ENCODE measurements at regions of chr1 and their contacts with region 1.

Region 1: DNA sequence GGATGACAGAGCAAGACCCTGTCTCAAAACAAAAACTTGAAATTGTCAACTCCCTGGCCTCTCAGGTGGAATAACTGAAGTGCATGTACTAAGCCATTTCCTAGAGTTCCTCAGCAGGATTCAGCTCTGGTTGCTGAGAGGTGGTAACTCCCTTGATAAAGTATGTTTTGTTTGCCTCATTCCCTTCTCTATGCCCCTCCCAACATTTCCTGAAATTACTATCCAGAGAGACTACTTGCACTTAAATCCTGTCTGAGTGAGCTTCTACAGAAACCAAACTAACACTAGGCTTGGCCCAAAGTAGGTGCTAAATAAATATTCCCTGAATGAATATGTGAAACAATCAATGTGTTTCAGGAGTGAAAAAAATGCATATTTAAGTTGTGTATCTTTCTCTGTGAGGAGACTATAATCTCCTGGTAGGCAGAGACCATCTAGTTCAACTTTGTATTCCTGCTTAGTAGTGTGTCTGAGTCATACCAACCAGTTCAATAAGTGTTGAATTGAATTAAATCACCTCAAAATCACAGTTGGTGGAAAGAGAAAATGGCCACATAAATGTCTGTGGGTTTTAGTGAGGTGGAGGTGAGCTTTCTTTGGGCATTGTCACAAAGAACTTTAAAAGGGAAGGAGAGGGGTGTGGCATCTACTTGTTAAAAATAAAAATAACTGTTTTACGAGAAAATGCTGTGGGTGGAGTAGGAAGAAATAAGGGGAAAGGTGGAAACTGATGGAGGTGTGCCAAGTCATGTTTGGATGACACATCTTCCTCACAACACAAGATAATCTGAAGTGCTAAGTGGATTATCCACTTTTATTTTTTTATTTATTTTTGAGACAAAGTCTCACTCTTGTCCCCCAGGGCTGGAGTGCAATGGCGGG is 12.6 kb downstream of the RIMKLA start:
- DNase-seq: peak; percentile 84
- ATAC-seq: peak; percentile 78
- H3K4me3 ChIP-seq: peak overlapping the region; percentile 21
- H3K27ac ChIP-seq: peak overlapping the region; percentile 64
- H3K4me1 ChIP-seq: peaks cover 26% of the 10 kb centered on the region
- H3K27me3 ChIP-seq: no peaks in the 10 kb centered on the region
- CTCF ChIP-seq: no peak

Region 2: GRCh38 chr1:42173155-42173933 is 219.9 kb before region 1 on chr1:
- CTCF ChIA-PET with region 1: no interaction called
- POLR2A ChIA-PET with region 1: no interaction called
- intact Hi-C with region 1: loop called (anchors 5 kb)
- DNase-seq: peak; percentile 56
- ATAC-seq: peak; percentile 31
- H3K4me3 ChIP-seq: no peak overlapping the region
- H3K27ac ChIP-seq: peak overlapping the region; percentile 88
- H3K4me1 ChIP-seq: peaks cover 64% of the 10 kb centered on the region
- H3K27me3 ChIP-seq: no peaks in the 10 kb centered on the region
- CTCF ChIP-seq: peak; percentile 98

Region 3: DNA sequence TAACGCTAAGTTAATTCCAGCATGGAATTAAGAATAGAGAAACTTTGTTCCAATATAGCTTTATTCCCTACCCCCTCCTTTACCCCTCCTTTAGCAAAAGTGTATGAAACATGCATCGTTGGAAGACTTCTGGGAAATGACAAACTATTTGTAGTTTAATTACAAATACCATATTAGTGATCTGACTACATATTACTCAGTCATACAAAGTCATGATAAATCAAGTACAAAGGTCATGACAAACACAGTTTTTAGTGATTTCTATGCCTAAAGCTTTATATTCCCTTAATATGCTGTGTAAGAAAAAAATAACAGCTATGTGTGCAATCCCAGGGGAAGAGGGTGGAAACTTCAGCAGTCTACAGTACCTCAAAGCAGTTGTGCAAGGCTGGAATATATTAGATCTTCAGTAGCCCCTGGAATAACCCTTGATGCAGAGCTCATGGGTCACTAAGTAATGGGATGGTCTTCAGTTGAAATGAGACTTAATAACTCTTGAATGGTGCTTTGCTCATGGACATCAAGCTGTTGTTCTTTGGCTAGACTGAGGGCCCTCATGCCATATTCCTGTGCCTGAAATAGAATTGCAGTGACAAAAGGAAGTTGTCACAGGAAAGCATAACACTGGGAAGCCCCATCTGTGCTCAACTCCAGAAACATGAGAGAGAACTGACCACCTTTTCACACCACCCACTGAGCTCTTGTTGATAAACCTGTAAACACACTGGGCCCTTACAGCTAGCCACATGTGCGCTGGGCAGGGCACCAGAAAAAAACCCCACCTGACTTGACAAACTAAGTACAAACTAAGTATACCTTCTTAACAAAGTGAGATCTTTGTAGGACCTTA is 37.3 kb after region 1 on chr1:
- CTCF ChIA-PET with region 1: no interaction called
- POLR2A ChIA-PET with region 1: no interaction called
- intact Hi-C with region 1: loop called (anchors 2 kb)
- DNase-seq: peak; percentile 75
- ATAC-seq: peak; percentile 59
- H3K4me3 ChIP-seq: no peak overlapping the region
- H3K27ac ChIP-seq: peak overlapping the region; percentile 57
- H3K4me1 ChIP-seq: peaks cover 49% of the 10 kb centered on the region
- H3K27me3 ChIP-seq: no peaks in the 10 kb centered on the region
- CTCF ChIP-seq: no peak

Region 4: GRCh38 chr1:42439940-42440339 is 46.7 kb after region 1 on chr1:
- CTCF ChIA-PET with region 1: no interaction called
- POLR2A ChIA-PET with region 1: no interaction called
- intact Hi-C with region 1: loop called (anchors 1 kb)
- DNase-seq: peak; percentile 85
- ATAC-seq: peak; percentile 98
- H3K4me3 ChIP-seq: no peak overlapping the region; the same call in 1 of the 2 replicates
- H3K27ac ChIP-seq: peak overlapping the region; percentile 38
- H3K4me1 ChIP-seq: peaks cover 15% of the 10 kb centered on the region
- H3K27me3 ChIP-seq: no peaks in the 10 kb centered on the region
- CTCF ChIP-seq: no peak

Region 5: DNA sequence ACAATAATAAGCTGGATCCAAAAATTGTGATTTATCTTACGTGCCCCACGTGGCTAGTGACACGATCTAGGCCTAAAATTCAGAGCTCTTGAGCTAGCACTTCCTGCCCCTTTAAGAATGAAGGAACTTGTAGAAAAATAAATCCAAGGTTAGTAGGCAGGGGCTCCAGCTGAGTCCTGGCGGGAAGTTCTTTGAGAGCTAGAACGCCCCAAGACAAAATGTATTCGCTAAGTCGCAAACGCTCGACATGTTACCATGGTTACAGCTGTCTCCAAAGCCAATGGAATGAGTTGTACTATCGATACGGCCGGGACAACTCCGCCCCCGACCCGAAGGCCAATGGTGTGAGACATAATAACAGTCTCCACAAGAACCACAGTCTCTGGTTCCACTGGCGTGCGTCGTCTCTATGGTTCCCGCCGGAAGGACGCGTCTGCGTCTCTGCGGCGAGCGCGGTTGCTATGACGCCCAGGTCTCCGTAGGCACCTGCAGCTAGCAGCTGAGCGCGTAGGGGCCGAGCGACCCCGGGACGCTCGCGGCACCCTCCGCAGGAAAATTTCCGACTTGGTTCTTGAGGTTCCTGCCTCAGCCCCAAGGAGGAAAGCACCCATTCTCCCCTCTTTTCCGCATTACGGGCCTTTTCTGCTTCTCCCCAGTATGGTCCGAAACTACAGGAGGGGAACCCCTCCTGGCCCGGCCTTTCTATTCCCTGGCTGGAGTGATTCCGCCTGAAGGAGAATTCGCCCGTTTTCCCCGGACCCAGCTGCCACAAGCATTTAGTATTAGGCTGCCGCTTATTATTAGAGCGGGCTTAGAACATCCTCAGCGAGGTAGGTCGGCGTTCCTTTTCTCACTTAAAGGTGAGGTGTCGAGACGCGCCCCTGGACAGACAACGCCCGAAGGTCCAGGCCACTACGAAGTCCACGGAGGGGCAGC is 69.9 kb after region 1 on chr1 and contains the start of gene CCDC30:
- CTCF ChIA-PET with region 1: no interaction called
- POLR2A ChIA-PET with region 1: interaction called, 3 read pairs
- intact Hi-C with region 1: loop called (anchors 5 kb)
- DNase-seq: peak; percentile 99
- ATAC-seq: peak; percentile 98
- H3K4me3 ChIP-seq: peak within 1 kb of the TSS; percentile 85
- H3K27ac ChIP-seq: peak within 1 kb of the TSS; percentile 29
- H3K4me1 ChIP-seq: peaks cover 18% of the 10 kb centered on the region
- H3K27me3 ChIP-seq: no peaks in the 10 kb centered on the region
- CTCF ChIP-seq: no peak
- total RNA-seq, gene CCDC30: 0.46 and 0.58 TPM in 2 replicates

Region 6: GRCh38 chr1:42958488-42959319 is 565.5 kb after region 1 on chr1 and contains the start of gene SLC2A1:
- CTCF ChIA-PET with region 1: no interaction called
- POLR2A ChIA-PET with region 1: no interaction called
- intact Hi-C with region 1: no loop called
- DNase-seq: peak; percentile 94
- ATAC-seq: peak; percentile 77
- H3K4me3 ChIP-seq: peak within 1 kb of the TSS; percentile 99
- H3K27ac ChIP-seq: peak within 1 kb of the TSS; percentile 49
- H3K4me1 ChIP-seq: peaks cover 70% of the 10 kb centered on the region
- H3K27me3 ChIP-seq: no peaks in the 10 kb centered on the region
- CTCF ChIP-seq: no peak
- total RNA-seq, gene SLC2A1: 245 and 264 TPM in 2 replicates